WTC11 (cell line): ENCODE measurements at regions of chr2 and their contacts with region 1.

Region 1: DNA sequence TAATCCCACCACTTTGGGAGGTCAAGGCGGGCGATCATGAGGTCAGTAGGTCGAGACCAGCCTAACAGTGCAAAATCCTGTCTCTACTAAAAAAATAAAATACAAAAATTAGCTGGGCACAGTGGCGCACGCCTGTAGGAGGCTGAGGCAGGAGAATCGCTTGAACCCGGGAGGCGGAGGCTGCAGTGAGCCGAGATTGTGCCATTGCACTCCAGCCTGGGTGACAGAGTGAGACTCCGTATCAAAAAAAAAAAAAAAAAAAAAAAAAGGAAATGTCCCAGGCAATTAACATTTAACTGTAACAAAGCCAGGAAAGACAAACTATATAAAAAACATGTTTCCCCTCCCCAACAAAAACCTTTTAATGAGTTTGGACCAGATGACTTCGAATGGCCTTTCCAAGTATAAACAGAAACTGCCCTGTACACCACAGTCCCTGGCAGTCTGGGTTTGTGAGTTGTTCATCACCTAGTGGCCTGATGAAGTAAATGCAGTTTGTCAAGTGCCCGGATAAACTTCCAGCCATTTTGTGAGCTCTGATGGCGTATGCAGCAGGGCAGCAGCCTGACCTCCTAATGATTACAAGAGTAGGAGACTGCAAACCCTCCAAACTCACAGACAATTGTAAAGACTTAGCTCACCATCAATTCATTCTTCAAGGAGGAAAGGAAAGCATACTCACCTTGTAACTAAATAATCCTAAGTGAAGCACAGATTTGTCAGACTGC is 16.6 kb upstream of the PCBP1 start:
- DNase-seq: peak; percentile 47
- ATAC-seq: peak; percentile 97
- H3K4me3 Mint-ChIP-seq: no peak overlapping the region
- H3K27ac Mint-ChIP-seq: peak overlapping the region; percentile 100
- H3K4me1 Mint-ChIP-seq: peaks cover 4% of the 10 kb centered on the region
- H3K27me3 Mint-ChIP-seq: no peaks in the 10 kb centered on the region
- CTCF ChIP-seq: peak; percentile 53

Region 2: GRCh38 chr2:70043252-70043875 is 27.3 kb before region 1 on chr2:
- CTCF ChIA-PET with region 1: interaction called, 11 read pairs
- POLR2A ChIA-PET with region 1: no interaction called
- DNase-seq: no peak
- ATAC-seq: no peak
- H3K4me3 Mint-ChIP-seq: no peak overlapping the region
- H3K27ac Mint-ChIP-seq: no peak overlapping the region; the same call in 1 of the 2 replicates
- H3K4me1 Mint-ChIP-seq: peaks cover 13% of the 10 kb centered on the region
- H3K27me3 Mint-ChIP-seq: no peaks in the 10 kb centered on the region
- CTCF ChIP-seq: no peak

Region 3: DNA sequence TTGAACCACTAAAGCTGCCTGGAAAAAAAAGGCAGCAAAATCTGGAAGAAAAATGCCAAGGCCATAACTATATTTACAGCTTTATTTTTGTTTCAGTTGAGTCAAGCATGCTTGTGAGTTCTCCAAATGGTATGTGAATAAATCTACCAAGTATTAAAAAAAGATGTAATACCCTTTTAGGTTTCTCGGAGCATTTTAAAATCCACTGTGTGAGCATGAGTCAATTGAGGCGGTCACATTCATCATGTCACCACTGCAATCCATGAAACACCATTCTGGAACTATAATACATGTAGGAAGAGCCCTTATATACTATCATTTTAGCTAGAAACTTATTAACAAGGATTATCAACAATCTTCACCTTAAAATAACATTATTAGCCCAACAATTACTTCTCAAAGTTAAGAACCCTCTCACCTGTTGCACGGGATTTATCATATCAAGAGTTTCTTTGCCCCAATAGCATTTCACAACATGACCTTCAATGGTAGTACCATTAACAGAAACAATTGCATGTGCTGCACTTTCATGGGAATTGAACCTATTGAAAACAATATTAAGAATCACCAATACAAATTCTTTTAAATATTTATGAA is 144.3 kb after region 1 on chr2:
- CTCF ChIA-PET with region 1: no interaction called
- POLR2A ChIA-PET with region 1: interaction called, 10 read pairs
- DNase-seq: no peak
- ATAC-seq: no peak
- H3K4me3 Mint-ChIP-seq: no peak overlapping the region
- H3K27ac Mint-ChIP-seq: no peak overlapping the region
- H3K4me1 Mint-ChIP-seq: no peaks in the 10 kb centered on the region
- H3K27me3 Mint-ChIP-seq: no peaks in the 10 kb centered on the region
- CTCF ChIP-seq: no peak